OCI-LY7 (cell line): ENCODE measurements at regions of chr2 and their contacts with region 1.

Region 1: DNA sequence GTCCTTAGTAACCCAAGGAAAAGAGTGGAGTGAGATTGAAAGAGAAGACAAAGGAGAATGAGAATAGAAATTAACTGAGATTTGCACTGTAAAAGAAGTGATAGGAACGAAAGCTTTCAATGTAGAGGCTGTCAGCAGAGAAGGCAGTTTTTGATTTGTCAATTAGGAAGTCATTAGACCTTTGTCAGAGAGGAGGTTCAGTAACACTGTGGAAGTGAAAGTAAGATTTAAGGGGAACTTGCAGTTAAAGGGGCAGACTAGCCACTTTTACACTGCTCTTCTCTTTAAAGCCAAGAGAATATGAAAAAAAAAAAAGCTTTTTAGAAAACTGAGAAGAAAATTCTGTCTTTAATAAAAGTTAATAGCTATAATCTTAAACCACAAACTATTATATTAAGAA is 11.5 kb upstream of the KYNU start:
- DNase-seq: peak; percentile 53
- H3K4me3 ChIP-seq: peak overlapping the region; percentile 12
- H3K27ac ChIP-seq: no peak overlapping the region
- H3K4me1 ChIP-seq: peaks cover 7% of the 10 kb centered on the region
- CTCF ChIP-seq: no peak

Region 2: GRCh38 chr2:142877216-142877756 is 11.4 kb after region 1 on chr2 and contains the start of gene KYNU:
- CTCF ChIA-PET with region 1: no interaction called
- POLR2A ChIA-PET with region 1: interaction called, 10 read pairs
- intact Hi-C with region 1: no loop called
- DNase-seq: no peak
- H3K4me3 ChIP-seq: no peak within 1 kb of the TSS
- H3K27ac ChIP-seq: no peak within 1 kb of the TSS
- H3K4me1 ChIP-seq: no peaks in the 10 kb centered on the region
- CTCF ChIP-seq: no peak
- total RNA-seq, gene KYNU: not detected in 2 replicates